ENCODE measurements at regions of chr4 and their contacts with region 1.

Region 1: GRCh38 chr4:184538023-184538599 is 63.8 kb upstream of the IRF2 start:
- DNase-seq: peak; percentile 91

Region 2: GRCh38 chr4:184287697-184288255 is 250.3 kb before region 1 on chr4:
- intact Hi-C with region 1: loop called (anchors 2 kb)
- DNase-seq: no peak

Region 3: GRCh38 chr4:184384056-184384809 is 153.9 kb before region 1 on chr4:
- intact Hi-C with region 1: loop called (anchors 2 kb)
- DNase-seq: no peak

Region 4: DNA sequence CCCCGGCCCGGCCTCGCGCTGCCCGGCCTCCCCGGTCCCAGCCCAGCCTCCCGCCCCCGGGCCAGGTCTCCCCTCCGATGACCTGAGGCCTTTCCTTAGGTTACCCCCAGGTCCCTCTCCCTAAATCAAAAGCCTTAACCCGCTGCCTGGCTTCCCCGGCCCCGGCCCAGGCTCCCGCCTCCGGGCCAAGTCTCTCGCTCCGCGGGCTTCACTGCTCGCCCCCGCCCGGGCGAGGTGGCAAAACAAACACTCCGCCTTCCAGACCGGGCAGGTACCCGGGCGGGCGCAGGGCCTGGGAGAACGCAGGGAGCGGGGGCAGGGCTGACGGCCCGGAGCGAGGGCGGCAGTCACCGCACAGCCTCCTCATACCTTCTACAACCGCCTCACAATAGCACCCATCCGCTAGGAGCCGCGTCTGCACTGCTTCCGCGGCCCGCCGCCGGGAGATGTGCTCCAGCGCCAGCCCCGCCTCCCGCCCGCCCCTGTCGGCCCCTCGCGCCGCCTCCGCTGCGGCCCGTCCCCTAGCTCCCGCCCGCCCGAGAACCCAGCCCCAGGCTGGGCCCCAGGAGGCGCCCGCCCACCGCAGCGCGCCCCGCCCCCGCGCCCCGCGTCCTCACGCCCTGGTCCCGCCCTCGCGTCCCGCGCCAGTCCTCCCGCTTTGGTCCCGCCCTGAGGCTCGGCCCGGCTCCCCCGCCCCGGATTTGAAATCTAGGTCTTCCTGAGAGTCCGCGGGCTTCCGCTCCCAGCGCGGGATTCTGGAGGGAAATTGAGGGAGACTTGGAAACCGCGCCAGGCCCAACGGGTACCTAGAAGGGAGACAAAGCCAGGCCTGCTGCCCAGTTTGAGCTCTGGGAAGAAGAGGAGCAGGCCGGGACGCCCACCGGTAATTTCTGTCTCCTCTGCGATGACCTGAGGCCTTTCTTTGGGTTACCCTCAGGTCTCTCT is 111.2 kb after region 1 on chr4 and contains the starts of genes CASP3 and PRIMPOL:
- intact Hi-C with region 1: loop called (anchors 1 kb)
- DNase-seq: peak; percentile 99
- total RNA-seq, gene CASP3: 21.7 TPM
- total RNA-seq, gene PRIMPOL: 8.3 TPM